CD8-positive, alpha-beta memory T cell (primary cell): ENCODE measurements at regions of chr10 and their contacts with region 1.

Region 1: DNA sequence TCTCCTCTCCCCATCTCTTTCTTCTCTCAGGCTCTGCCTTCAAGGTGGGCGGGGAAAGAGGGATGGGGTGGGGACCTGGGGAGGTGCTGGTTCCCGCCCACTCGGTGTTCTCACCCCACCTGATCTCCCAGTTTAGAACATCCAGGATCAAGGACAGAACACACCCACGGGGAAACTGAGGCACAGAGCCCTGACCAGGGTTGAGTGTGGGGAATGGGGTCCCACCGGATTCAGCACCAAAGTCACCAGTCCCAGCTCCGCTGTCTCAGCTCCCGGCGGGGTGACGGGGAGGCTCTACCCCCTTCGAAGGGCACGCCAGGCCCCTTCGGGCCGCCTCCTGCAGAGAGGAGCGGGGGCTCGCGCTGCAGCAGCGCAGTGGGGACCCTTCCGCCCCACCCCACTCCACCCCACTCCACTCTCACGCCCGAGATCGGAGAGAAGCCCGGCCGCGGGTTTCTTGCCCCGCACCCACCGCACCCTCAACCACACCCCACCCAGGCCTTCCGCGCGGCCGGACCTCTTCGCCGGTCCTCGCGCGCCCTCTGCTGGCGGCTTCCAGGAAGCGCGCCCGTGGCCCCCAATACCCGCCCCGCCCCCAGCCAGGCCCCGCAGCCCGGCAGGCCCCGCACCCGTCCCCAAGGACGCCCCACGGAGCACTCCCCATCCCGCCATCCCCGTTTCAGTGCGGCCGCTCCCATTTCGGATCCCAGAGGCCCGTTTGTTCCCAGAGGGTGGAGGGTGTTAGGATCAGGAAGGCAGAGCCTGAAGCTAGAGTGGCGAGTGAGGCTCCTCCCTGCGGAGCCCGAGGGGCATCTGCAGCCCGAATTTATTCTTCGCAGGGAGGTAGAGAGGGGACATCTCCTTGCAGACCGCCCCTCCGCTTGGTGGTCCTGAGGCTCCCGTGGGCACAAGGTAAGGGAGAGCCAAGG is 18.0 kb downstream of the POLL start:
- DNase-seq: peak; percentile 73 to 85 (median 78)
- H3K4me3 ChIP-seq: peak overlapping the region; percentile 75
- H3K4me3 Mint-ChIP-seq: peak overlapping the region; percentile 50 to 89 (median 77)
- H3K27ac ChIP-seq: no peak overlapping the region
- H3K27ac Mint-ChIP-seq: no peak overlapping the region
- H3K4me1 ChIP-seq: peaks cover 14% of the 10 kb centered on the region
- H3K4me1 Mint-ChIP-seq: peaks cover 11 to 21% (median 15%) of the 10 kb centered on the region in 3 donors
- H3K27me3 ChIP-seq: peaks cover 36% of the 10 kb centered on the region
- H3K27me3 Mint-ChIP-seq: peaks cover 32 to 41% of the 10 kb centered on the region in 2 donors

Region 2: DNA sequence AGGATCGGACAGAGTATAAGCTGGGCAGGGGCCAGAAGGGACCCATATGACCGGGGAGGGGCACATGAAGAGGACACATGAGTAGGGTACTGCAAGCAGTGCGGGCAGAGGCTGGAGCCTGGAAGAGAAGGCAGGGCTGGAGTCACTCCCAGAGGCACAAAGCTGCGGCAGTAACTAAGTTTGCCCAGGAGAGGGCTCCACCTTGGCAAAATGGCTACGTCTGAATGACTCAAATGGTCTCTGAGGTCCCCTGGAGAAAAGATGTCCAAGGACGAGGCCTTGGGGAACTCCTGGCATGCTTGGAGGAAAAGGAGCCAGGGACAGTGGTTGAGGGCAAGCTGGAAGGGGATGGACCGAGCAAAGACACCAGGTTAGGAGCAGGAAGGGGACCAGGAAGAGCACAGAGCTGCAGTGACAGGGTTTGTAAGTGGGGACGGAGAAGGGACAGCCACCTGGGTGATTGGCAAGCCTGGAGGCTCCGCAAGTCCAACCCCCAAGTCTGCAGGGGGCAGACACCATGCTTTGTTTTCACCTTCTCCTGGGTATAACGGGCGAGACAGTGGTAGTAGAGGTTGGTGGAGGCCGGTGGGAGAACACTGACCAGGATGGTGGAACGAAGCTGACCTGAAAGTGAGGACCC is 297.8 kb before region 1 on chr10:
- CTCF ChIA-PET with region 1: interaction called, 11 read pairs
- POLR2A ChIA-PET with region 1: no interaction called
- DNase-seq: peak; percentile 26 to 66 (median 39)
- H3K4me3 ChIP-seq: no peak overlapping the region
- H3K4me3 Mint-ChIP-seq: no peak overlapping the region
- H3K27ac ChIP-seq: no peak overlapping the region
- H3K27ac Mint-ChIP-seq: peak overlapping the region in 1 of 8 donors; percentile 72
- H3K4me1 ChIP-seq: no peaks in the 10 kb centered on the region
- H3K4me1 Mint-ChIP-seq: peaks cover 0 to 5% (median 2%) of the 10 kb centered on the region in 3 donors
- H3K27me3 ChIP-seq: no peaks in the 10 kb centered on the region
- H3K27me3 Mint-ChIP-seq: peaks cover 22 to 47% of the 10 kb centered on the region in 2 donors

Region 3: GRCh38 chr10:101580486-101581399 is 10.6 kb after region 1 on chr10:
- CTCF ChIA-PET with region 1: interaction called, 33 read pairs
- POLR2A ChIA-PET with region 1: no interaction called
- DNase-seq: no peak
- H3K4me3 ChIP-seq: no peak overlapping the region
- H3K4me3 Mint-ChIP-seq: no peak overlapping the region
- H3K27ac ChIP-seq: no peak overlapping the region
- H3K27ac Mint-ChIP-seq: peak overlapping the region in 1 of 8 donors; percentile 70
- H3K4me1 ChIP-seq: no peaks in the 10 kb centered on the region
- H3K4me1 Mint-ChIP-seq: peaks cover 4 to 6% (median 5%) of the 10 kb centered on the region in 3 donors
- H3K27me3 ChIP-seq: no peaks in the 10 kb centered on the region
- H3K27me3 Mint-ChIP-seq: no peaks in the 10 kb centered on the region

Region 4: DNA sequence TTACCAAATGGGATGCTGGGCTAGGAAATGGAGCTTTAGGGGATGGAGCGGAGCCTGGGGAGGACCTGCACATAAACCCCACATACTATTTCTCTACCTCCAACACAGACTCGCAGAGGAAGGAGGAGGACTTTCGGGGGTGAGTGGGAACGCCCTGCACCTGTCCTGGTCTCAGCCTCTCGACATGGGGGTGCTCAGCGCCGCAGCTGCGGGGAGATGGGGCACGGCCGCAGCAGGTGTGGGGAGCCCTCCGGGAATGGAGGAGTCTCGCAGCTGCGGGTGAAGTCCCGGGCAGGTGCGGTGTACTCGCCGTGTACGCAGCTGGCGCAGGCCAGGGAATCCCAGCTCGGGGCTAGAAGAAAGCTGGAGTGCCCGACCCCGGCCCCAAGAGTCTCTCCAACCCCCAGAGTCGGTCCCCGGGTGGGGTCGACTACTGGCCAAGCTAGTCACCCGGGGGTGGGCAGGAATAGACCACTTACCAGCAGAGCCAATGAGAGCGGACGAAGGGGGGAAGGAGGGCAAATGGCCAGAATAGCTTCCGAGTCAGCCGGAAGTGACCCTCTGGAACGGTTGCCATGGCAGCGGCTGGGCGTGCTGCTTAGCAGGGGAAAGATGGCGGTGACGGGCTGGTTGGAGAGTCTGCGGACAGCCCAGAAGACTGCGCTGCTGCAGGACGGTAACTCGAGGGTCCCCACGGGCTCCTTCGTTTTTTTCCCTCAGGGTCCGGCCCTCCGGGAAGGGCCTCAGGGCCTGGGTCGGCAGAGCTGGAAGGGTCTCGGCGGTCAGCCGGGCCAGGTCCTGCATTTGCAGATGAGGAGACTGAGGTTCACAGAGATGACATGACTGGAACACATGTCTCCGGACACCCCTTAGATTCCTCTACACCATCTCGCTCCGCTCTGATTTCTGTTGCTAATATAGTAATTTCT is 17.9 kb after region 1 on chr10 and contains the starts of genes DPCD and POLL:
- CTCF ChIA-PET with region 1: interaction called, 33 read pairs
- POLR2A ChIA-PET with region 1: no interaction called
- DNase-seq: peak; percentile 82 to 94 (median 85)
- H3K4me3 ChIP-seq: peak within 1 kb of the TSS; percentile 95
- H3K4me3 Mint-ChIP-seq: peak within 1 kb of the TSS; percentile 93 to 97 (median 95)
- H3K27ac ChIP-seq: peak within 1 kb of the TSS; percentile 85
- H3K27ac Mint-ChIP-seq: peak within 1 kb of the TSS; percentile 84 to 97 (median 90)
- H3K4me1 ChIP-seq: peaks cover 16% of the 10 kb centered on the region
- H3K4me1 Mint-ChIP-seq: peaks cover 27 to 35% (median 28%) of the 10 kb centered on the region in 3 donors
- H3K27me3 ChIP-seq: peaks cover under 1% of the 10 kb centered on the region
- H3K27me3 Mint-ChIP-seq: no peaks in the 10 kb centered on the region
- total RNA-seq, gene DPCD: 21.0 to 22.6 TPM
- total RNA-seq, gene POLL: 30.9 to 32.6 TPM

Region 5: GRCh38 chr10:101617102-101617823 is 47.2 kb after region 1 on chr10:
- CTCF ChIA-PET with region 1: no interaction called
- POLR2A ChIA-PET with region 1: no interaction called
- DNase-seq: no peak
- H3K4me3 ChIP-seq: no peak overlapping the region
- H3K4me3 Mint-ChIP-seq: no peak overlapping the region
- H3K27ac ChIP-seq: no peak overlapping the region
- H3K27ac Mint-ChIP-seq: peak overlapping the region in 5 of 8 donors; percentile 19 to 84 (median 73)
- H3K4me1 ChIP-seq: no peaks in the 10 kb centered on the region
- H3K4me1 Mint-ChIP-seq: peaks cover 0 to 3% (median 0%) of the 10 kb centered on the region in 3 donors
- H3K27me3 ChIP-seq: no peaks in the 10 kb centered on the region
- H3K27me3 Mint-ChIP-seq: no peaks in the 10 kb centered on the region

Region 6: DNA sequence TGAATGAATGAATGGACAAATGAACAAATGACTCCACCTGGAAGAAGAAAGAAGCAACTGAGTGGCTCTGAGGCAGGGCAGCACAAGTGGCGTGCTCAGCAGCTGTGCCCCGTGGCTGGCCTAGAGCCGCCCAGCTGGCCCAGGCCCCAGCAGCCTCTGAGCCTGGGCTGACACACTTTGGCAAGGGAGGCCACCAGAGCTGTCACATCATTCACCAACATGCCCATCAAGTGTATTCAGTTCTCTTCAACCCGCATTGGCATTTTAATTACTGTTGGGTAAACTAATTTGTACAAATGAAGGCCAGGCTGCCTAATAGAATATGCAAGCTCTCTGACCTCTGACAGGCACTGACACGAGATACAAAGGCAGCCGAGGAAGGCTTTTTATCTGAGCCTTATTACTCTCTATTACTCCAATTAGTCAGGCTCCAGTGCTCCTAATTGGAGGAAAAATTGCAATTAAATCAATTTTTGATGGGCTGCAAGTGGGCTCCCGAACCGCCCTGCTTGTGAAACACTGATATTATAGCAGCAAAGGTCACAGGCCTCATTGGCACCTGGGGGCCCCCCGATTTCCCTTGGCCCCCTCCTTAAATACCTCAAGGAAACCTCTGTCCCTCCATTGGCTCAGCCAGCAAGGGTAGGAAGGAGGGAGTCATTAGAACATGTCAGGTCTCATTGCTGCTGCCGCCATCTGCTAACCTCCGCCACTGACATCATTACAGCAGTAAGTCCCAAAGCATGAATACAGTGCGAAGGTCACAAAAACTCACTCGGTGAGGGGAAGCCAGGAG is 59.9 kb after region 1 on chr10:
- CTCF ChIA-PET with region 1: no interaction called
- POLR2A ChIA-PET with region 1: no interaction called
- DNase-seq: no peak
- H3K4me3 ChIP-seq: no peak overlapping the region
- H3K4me3 Mint-ChIP-seq: no peak overlapping the region
- H3K27ac ChIP-seq: no peak overlapping the region
- H3K27ac Mint-ChIP-seq: peak overlapping the region in 1 of 8 donors; percentile 73
- H3K4me1 ChIP-seq: no peaks in the 10 kb centered on the region
- H3K4me1 Mint-ChIP-seq: peaks cover 34 to 63% (median 44%) of the 10 kb centered on the region in 3 donors
- H3K27me3 ChIP-seq: no peaks in the 10 kb centered on the region
- H3K27me3 Mint-ChIP-seq: no peaks in the 10 kb centered on the region